Activated CD8-positive, alpha-beta memory T cell treated with anti-CD3 and anti-CD28 coated beads, Interleukin-2, amount 10 ng/mL, durations not matched to agents 7 days and 5 days (primary cell): ENCODE measurements at regions of chr18 and their contacts with region 1.

Region 1: GRCh38 chr18:23864624-23865023 is 149.9 kb upstream of the TTC39C start:
- DNase-seq: peak; percentile 80
- ATAC-seq: peak; percentile 93
- H3K4me3 Mint-ChIP-seq: no peak overlapping the region
- H3K27ac Mint-ChIP-seq: peak overlapping the region; percentile 91
- H3K4me1 Mint-ChIP-seq: peaks cover 61% of the 10 kb centered on the region
- H3K27me3 Mint-ChIP-seq: no peaks in the 10 kb centered on the region

Region 2: GRCh38 chr18:23828426-23828825 is 36.2 kb before region 1 on chr18:
- CTCF ChIA-PET with region 1: interaction called, 14 read pairs
- DNase-seq: peak; percentile 81
- ATAC-seq: peak; percentile 99
- H3K4me3 Mint-ChIP-seq: no peak overlapping the region
- H3K27ac Mint-ChIP-seq: peak overlapping the region; percentile 86
- H3K4me1 Mint-ChIP-seq: peaks cover 40% of the 10 kb centered on the region
- H3K27me3 Mint-ChIP-seq: no peaks in the 10 kb centered on the region